ENCODE measurements at regions of chr14 and their contacts with region 1.

Region 1: GRCh38 chr14:24241829-24242443 is 487 bp downstream of the TINF2 start:
- DNase-seq: peak; percentile 97
- ATAC-seq: peak; percentile 91
- H3K4me3 ChIP-seq: peak overlapping the region; percentile 64 to 81 (median 71)
- H3K27ac ChIP-seq: peak overlapping the region; percentile 91
- H3K4me1 ChIP-seq: peaks cover 47% of the 10 kb centered on the region
- H3K27me3 ChIP-seq: no peaks in the 10 kb centered on the region; a peak in 1 of 5 replicates
- CTCF ChIP-seq: peak; percentile 62
- EP300 ChIP-seq: peak in 1 of 2 experiments; percentile 86; a peak in 2 of 4 replicates
- POLR2A ChIP-seq: no peak
- RAD21 ChIP-seq: 0 out of 2 replicates have a peak, but pooled peaks have one; percentile 30

Region 2: GRCh38 chr14:24141097-24141880 is 100.6 kb before region 1 on chr14 and contains the start of gene EMC9:
- CTCF ChIA-PET with region 1: no interaction called
- POLR2A ChIA-PET with region 1: interaction called, 33 read pairs
- in situ Hi-C with region 1: no loop called
- intact Hi-C with region 1: no loop called
- DNase-seq: peak; percentile 100
- ATAC-seq: peak; percentile 88
- H3K4me3 ChIP-seq: peak within 1 kb of the TSS; percentile 83 to 99 (median 95)
- H3K27ac ChIP-seq: peak within 1 kb of the TSS; percentile 86
- H3K4me1 ChIP-seq: peaks cover 77% of the 10 kb centered on the region
- H3K27me3 ChIP-seq: peaks cover 0 to 3% of the 10 kb centered on the region in 2 experiments; a peak in 1 of 5 replicates
- CTCF ChIP-seq: peak; percentile 53
- EP300 ChIP-seq: peak in 1 of 2 experiments; percentile 70; a peak in 2 of 4 replicates
- POLR2A ChIP-seq: peak in 1 of 2 experiments; percentile 88; a peak in 2 of 4 replicates
- RAD21 ChIP-seq: peak; percentile 84
- total RNA-seq, gene EMC9: 71.2 and 78.7 TPM in 2 replicates

Region 3: GRCh38 chr14:24195191-24196070 is 46.5 kb before region 1 on chr14 and contains the start of gene TM9SF1:
- CTCF ChIA-PET with region 1: interaction called, 4 read pairs
- POLR2A ChIA-PET with region 1: interaction called, 54 read pairs
- in situ Hi-C with region 1: no loop called
- intact Hi-C with region 1: no loop called
- DNase-seq: peak; percentile 93
- ATAC-seq: peak; percentile 94
- H3K4me3 ChIP-seq: peak within 1 kb of the TSS; percentile 79 to 91 (median 85)
- H3K27ac ChIP-seq: peak within 1 kb of the TSS; percentile 84
- H3K4me1 ChIP-seq: peaks cover 65% of the 10 kb centered on the region
- H3K27me3 ChIP-seq: no peaks in the 10 kb centered on the region; a peak in 1 of 5 replicates
- CTCF ChIP-seq: peak; percentile 54
- EP300 ChIP-seq: peak; percentile 7 to 39; a peak in 1 of 4 replicates
- POLR2A ChIP-seq: peak in 1 of 2 experiments; percentile 81; a peak in 2 of 4 replicates
- RAD21 ChIP-seq: peak; percentile 52
- total RNA-seq, gene TM9SF1: 56.4 and 110 TPM in 2 replicates

Region 4: GRCh38 chr14:24271134-24271833 is 29.3 kb after region 1 on chr14 and contains the start of gene RABGGTA:
- CTCF ChIA-PET with region 1: interaction called, 33 read pairs
- POLR2A ChIA-PET with region 1: interaction called, 435 read pairs
- in situ Hi-C with region 1: no loop called
- intact Hi-C with region 1: loop called (anchors 1 kb)
- DNase-seq: peak; percentile 96
- ATAC-seq: peak; percentile 95
- H3K4me3 ChIP-seq: peak within 1 kb of the TSS; percentile 78 to 96 (median 78)
- H3K27ac ChIP-seq: peak within 1 kb of the TSS; percentile 92
- H3K4me1 ChIP-seq: peaks cover 22% of the 10 kb centered on the region
- H3K27me3 ChIP-seq: no peaks in the 10 kb centered on the region; a peak in 1 of 5 replicates
- CTCF ChIP-seq: peak; percentile 99
- EP300 ChIP-seq: peak; percentile 76 to 86; a peak in 3 of 4 replicates
- POLR2A ChIP-seq: peak in 1 of 2 experiments; percentile 96; a peak in 2 of 4 replicates
- RAD21 ChIP-seq: peak; percentile 91
- total RNA-seq, gene RABGGTA: 31.2 and 57.9 TPM in 2 replicates

Region 5: GRCh38 chr14:24315807-24316603 is 74.1 kb after region 1 on chr14:
- CTCF ChIA-PET with region 1: no interaction called
- POLR2A ChIA-PET with region 1: interaction called, 850 read pairs
- in situ Hi-C with region 1: no loop called
- intact Hi-C with region 1: no loop called
- DNase-seq: peak; percentile 65
- ATAC-seq: peak; percentile 81
- H3K4me3 ChIP-seq: peak overlapping the region; percentile 29 to 73 (median 40)
- H3K27ac ChIP-seq: peak overlapping the region; percentile 18
- H3K4me1 ChIP-seq: peaks cover 37% of the 10 kb centered on the region
- H3K27me3 ChIP-seq: peaks cover 6 to 39% of the 10 kb centered on the region in 2 experiments; a peak in 4 of 5 replicates
- CTCF ChIP-seq: peak; percentile 88
- EP300 ChIP-seq: 0 out of 4 replicates have a peak, but pooled peaks of 1 of the 2 experiments have one; percentile 9
- POLR2A ChIP-seq: no peak; a peak in 2 of 4 replicates
- RAD21 ChIP-seq: peak; percentile 72

Region 6: GRCh38 chr14:24442273-24443052 is 200.5 kb after region 1 on chr14 and contains the start of gene SDR39U1:
- CTCF ChIA-PET with region 1: no interaction called
- POLR2A ChIA-PET with region 1: interaction called, 29 read pairs
- in situ Hi-C with region 1: loop called (anchors 10 kb)
- intact Hi-C with region 1: no loop called
- DNase-seq: peak; percentile 100
- ATAC-seq: peak; percentile 91
- H3K4me3 ChIP-seq: peak within 1 kb of the TSS; percentile 74 to 98 (median 84)
- H3K27ac ChIP-seq: peak within 1 kb of the TSS; percentile 93
- H3K4me1 ChIP-seq: peaks cover 18% of the 10 kb centered on the region
- H3K27me3 ChIP-seq: peaks cover 0 to 5% of the 10 kb centered on the region in 2 experiments; a peak in 1 of 5 replicates
- CTCF ChIP-seq: peak; percentile 50
- EP300 ChIP-seq: 0 out of 4 replicates have a peak, but pooled peaks have one; percentile 44 to 47
- POLR2A ChIP-seq: peak in 1 of 2 experiments; percentile 98; a peak in 2 of 4 replicates
- RAD21 ChIP-seq: no peak; the same call in 1 of the 2 replicates
- total RNA-seq, gene SDR39U1: 25.0 and 34.4 TPM in 2 replicates

Measured in HepG2 (cell line).